Activated CD4-positive, alpha-beta T cell treated with anti-CD3 and anti-CD28 coated beads, Interleukin-2, amount 10 ng/mL, durations not matched to agents 24 days and 14 days (primary cell): ENCODE measurements at regions of chr18 and their contacts with region 1.

Region 1: GRCh38 chr18:72672364-72673184 is 128.4 kb upstream of the CBLN2 start:
- DNase-seq: peak; percentile 56
- H3K4me3 Mint-ChIP-seq: no peak overlapping the region
- H3K27ac Mint-ChIP-seq: no peak overlapping the region
- H3K4me1 Mint-ChIP-seq: no peaks in the 10 kb centered on the region
- H3K27me3 Mint-ChIP-seq: no peaks in the 10 kb centered on the region

Region 2: GRCh38 chr18:71456206-71456605 is 1216.4 kb before region 1 on chr18:
- intact Hi-C with region 1: no loop called
- DNase-seq: no peak
- H3K4me3 Mint-ChIP-seq: no peak overlapping the region
- H3K27ac Mint-ChIP-seq: no peak overlapping the region
- H3K4me1 Mint-ChIP-seq: no peaks in the 10 kb centered on the region
- H3K27me3 Mint-ChIP-seq: no peaks in the 10 kb centered on the region

Region 3: DNA sequence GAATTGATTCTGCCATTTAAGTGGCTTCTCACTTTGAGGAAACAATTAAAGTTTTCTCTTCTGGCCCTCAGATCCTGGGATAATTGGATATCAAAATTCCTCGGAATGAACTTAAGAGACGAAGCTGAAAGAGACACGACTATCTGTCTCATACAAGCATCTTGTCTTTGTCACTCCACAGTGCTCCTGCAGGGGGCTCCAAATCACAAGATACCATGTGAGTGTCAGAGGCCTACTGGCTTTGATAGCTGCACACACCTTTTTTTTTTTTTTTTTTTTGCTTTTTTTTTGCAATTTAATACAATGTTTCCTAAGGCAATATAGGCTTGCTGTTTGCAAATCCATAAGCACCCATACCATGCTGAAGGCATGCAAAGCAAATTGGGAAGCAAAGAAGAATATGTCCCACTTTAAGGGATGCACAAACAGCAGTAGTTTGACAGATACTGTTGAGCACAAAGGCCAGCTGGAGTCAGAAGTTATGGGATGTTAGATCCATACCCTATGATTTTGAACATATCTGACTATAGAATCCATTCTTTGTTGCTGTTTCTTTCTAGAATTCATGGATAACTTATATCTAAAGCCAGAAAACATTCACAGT is 19.5 kb before region 1 on chr18:
- intact Hi-C with region 1: loop called (anchors 1 kb)
- DNase-seq: peak; percentile 82
- H3K4me3 Mint-ChIP-seq: no peak overlapping the region
- H3K27ac Mint-ChIP-seq: no peak overlapping the region
- H3K4me1 Mint-ChIP-seq: no peaks in the 10 kb centered on the region
- H3K27me3 Mint-ChIP-seq: no peaks in the 10 kb centered on the region

Region 4: DNA sequence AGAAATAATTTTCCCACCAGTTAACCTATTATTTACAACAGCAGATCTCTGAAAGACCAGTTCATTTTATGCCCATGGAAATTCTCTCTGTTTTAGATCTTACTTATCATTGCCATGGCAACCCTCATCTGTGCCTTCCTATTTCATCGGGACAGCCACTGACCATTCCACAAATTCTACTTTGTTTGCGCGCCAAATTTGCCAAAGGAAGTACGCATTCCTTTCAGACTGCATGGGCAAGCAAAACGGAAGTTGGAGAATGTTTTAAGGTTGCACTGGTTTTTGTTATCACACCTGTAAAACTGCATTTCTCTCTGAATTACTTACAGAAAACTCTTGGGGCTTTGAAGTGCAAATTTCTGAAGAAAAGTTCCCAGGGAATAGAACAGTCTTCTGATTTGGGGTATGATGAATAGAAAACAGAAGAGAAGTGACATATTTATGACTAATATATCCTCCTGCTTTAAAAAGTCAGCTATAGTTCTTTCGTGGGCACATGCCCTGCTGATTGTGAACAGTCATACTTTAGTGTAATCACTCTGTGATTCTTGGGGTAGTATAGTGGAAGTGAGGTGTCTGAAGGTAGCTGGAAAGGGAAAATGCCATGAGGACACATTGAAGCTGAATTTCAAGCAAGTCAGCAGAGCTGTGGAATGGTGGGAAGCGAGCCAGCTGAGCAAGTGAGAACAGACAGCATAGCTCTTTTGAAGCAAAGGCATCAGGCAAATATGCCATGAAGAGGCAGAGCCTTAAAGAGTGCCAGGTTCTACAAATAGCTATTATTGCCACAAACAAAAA is 174.4 kb after region 1 on chr18:
- intact Hi-C with region 1: no loop called
- DNase-seq: no peak
- H3K4me3 Mint-ChIP-seq: no peak overlapping the region
- H3K27ac Mint-ChIP-seq: no peak overlapping the region
- H3K4me1 Mint-ChIP-seq: no peaks in the 10 kb centered on the region
- H3K27me3 Mint-ChIP-seq: no peaks in the 10 kb centered on the region